ENCODE measurements at regions of chr3 and their contacts with region 1.

Region 1: DNA sequence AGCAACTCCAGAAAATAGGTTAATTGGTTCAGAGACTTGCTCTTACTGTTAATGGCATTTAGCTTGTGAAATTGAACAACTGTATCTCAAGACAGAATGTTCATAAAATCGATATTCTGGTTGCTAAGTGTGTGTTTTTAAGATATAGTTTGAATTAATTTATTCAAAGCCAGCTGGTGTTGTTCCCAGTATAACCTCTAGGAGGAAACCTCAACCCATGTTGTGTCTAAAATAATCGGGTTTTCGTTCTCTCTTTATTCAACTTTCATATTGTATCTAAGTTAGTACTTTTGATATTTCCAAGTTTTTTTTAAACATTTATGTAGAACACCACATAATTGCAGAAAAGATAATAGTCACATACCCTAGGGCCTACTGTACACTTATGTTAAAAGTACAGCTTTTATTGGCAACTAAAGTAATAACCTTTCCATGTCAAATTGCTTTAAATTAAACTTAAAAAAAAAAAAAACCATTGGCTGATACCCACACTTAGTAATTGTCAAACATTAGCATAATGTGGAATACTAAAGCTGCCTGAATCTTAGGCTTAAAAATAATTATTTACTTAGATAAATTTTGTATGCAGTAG is 90.9 kb downstream of the SAMMSON start:
- ATAC-seq: peak in 1 of 8 experiments; percentile 23
- H3K4me3 ChIP-seq: no peak overlapping the region
- H3K27ac ChIP-seq: no peak overlapping the region
- H3K4me1 ChIP-seq: peaks cover 7 to 17% of the 10 kb centered on the region in 2 donors

Region 2: DNA sequence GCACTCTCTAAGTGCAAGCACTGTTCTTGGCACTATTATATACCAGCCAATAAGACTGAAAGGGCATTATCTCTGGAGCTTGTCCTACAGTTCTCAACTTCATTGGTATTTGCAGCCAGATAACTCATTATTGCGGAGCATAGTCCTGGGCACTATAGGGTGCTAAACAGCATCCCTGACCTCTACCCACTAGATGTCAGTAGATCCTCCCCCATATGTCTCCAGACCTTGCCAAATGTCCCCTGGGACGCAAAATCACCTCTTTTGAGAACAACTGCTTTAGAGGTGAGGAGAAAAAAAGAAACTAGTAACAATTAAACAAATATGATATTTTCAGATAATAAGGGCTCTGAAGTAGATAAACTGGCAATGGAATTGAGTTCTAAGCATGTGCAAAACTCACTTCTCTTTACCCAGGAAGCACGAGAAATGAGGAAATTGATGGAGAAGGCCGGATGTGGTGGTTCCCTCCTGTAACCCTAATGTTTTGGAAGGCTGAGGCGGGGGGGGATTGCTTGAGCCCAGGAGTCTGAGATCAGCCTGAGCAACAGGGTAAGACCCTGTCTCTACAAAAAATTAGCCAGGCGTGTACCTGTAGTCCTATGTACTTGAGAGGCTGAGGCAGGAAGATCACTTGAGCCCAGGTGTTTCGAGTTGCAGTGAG is 765.9 kb before region 1 on chr3:
- in situ Hi-C with region 1: no loop called
- ATAC-seq: peak in 3 of 8 experiments; percentile 9 to 73 (median 26)
- H3K4me3 ChIP-seq: no peak overlapping the region
- H3K27ac ChIP-seq: no peak overlapping the region
- H3K4me1 ChIP-seq: peaks cover 2 to 4% of the 10 kb centered on the region in 2 donors

Region 3: DNA sequence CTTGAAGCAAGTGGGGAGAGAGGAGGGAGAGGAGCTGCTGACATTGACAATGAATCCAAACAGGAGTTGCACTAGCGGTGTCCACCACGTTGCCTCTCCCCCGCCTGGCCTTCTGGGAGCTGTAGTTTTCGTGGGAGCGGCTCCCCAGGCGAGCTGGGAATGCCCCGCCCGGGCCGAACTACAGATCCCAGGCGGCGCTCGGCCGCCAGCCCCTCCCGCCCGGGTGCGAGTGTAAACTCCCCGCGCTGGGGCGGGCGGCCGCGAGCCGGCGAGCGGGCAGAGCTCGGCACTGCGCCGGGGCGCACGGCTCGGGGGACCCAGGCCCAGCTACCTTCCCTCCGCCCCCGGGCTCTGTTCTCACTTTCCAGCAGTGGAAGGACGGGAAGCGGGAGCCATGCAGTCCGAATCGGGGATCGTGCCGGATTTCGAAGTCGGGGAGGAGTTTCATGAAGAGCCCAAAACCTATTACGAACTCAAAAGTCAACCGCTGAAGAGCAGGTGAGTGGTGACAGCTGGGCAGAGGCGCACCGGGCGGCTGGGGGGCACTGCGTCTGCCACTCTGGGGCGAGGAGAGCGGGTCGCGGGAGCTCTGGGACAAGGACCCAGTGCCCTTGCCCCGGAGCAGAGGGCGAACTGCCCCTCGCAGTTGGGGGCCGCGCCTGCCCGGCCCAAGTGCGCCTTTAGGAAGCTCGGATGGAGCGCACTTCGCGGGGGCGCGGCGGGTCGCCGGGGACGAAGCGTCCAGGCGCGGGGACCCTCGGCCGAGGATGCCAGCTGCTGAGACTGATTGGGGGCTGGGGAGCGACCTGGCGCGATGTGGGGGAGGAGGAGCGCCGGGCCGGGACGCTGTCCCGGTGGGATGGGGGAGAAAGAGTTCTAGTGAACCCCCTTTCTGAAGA is 351.0 kb before region 1 on chr3 and contains the start of gene MITF:
- in situ Hi-C with region 1: no loop called
- ATAC-seq: peak; percentile 94 to 99 (median 98)
- H3K4me3 ChIP-seq: peak within 1 kb of the TSS; percentile 49 to 87 (median 65)
- H3K27ac ChIP-seq: no peak within 1 kb of the TSS
- H3K4me1 ChIP-seq: no peaks in the 10 kb centered on the region
- total RNA-seq, gene MITF: 0.21 to 21.9 (median 1.1) TPM

Region 4: DNA sequence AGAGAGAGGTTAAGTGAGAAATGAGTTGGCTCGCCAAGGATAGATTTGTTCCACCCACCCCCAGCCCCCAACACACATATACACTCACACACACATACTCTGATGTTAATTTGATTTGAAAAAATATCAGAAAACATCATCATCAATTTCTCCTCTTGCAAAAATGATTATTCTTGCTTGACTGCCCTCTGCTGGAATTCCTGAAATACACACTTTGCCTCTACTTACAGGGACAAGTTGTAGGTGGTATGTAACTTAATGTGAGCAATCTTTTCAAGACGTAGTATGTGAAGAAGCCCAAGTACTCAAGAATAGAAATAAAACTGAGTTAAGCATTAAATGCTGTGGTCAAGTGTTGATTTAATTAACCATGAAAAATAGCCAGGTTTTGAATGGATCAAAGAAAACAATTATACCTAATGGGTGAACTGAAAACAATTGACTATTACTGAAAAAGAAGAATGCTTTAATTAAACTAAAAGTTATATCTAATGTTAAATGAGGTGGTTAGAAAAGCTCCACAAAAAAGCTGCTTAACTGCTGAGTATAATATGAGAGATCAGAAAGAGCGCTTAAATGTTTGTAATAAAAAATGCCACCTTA is 268.7 kb after region 1 on chr3:
- in situ Hi-C with region 1: loop called in 4 of 9 experiments (anchors 25 kb)
- ATAC-seq: peak in 4 of 8 experiments; percentile 23 to 41 (median 34)
- H3K4me3 ChIP-seq: no peak overlapping the region
- H3K27ac ChIP-seq: no peak overlapping the region
- H3K4me1 ChIP-seq: no peaks in the 10 kb centered on the region